Activated CD4-positive, alpha-beta T cell treated with anti-CD3 and anti-CD28 coated beads, Interleukin-2, amount 10 ng/mL, durations not matched to agents 24 days and 14 days (primary cell): ENCODE measurements at regions of chr11 and their contacts with region 1.

Region 1: GRCh38 chr11:67277231-67277961 is 11.1 kb downstream of the GRK2 start:
- DNase-seq: peak; percentile 97
- H3K4me3 Mint-ChIP-seq: peak overlapping the region; percentile 81
- H3K27ac Mint-ChIP-seq: peak overlapping the region; percentile 99
- H3K4me1 Mint-ChIP-seq: peaks cover 52% of the 10 kb centered on the region
- H3K27me3 Mint-ChIP-seq: no peaks in the 10 kb centered on the region

Region 2: GRCh38 chr11:67060111-67060522 is 217.3 kb before region 1 on chr11:
- intact Hi-C with region 1: no loop called
- DNase-seq: no peak
- H3K4me3 Mint-ChIP-seq: no peak overlapping the region
- H3K27ac Mint-ChIP-seq: no peak overlapping the region
- H3K4me1 Mint-ChIP-seq: peaks cover 6% of the 10 kb centered on the region
- H3K27me3 Mint-ChIP-seq: peaks cover 9% of the 10 kb centered on the region

Region 3: GRCh38 chr11:67239783-67240575 is 37.4 kb before region 1 on chr11:
- intact Hi-C with region 1: loop called (anchors 1 kb)
- DNase-seq: peak; percentile 98
- H3K4me3 Mint-ChIP-seq: peak overlapping the region; percentile 100
- H3K27ac Mint-ChIP-seq: peak overlapping the region; percentile 98
- H3K4me1 Mint-ChIP-seq: peaks cover 43% of the 10 kb centered on the region
- H3K27me3 Mint-ChIP-seq: no peaks in the 10 kb centered on the region

Region 4: GRCh38 chr11:67288452-67289225 is 11.2 kb after region 1 on chr11:
- intact Hi-C with region 1: loop called (anchors 1 kb)
- DNase-seq: peak; percentile 97
- H3K4me3 Mint-ChIP-seq: peak overlapping the region; percentile 85
- H3K27ac Mint-ChIP-seq: peak overlapping the region; percentile 98
- H3K4me1 Mint-ChIP-seq: peaks cover 48% of the 10 kb centered on the region
- H3K27me3 Mint-ChIP-seq: no peaks in the 10 kb centered on the region